ENCODE measurements at regions of chr1 and their contacts with region 1.

Region 1: DNA sequence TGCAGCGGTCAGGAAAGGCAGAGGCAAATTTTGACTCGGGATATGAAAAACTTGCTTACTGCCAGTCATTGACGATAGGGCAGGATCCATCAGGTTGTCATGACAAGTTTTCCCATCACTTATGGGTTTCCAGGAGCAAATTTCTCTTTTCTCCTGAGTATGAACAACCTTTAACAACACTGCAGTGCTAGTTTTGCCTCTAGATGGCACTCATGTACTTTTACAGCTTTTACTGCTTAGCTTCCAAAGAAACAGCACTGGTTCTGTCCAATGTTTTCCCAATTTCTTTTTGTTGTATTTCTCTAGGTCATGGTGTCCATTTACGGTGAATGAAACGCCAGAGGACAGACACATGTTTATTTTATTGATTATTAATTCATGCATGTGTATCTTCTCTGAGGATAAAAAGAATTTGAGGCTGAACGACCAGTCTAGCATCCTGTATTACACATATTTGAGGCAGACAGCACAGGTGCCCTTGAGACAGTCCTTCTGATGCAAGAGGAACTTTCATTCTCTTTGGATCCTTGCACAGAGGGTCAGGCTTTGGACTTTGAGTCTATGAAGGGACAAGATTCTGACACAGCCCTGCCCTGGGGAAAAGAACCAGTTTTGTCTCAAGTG is 112.3 kb upstream of the TRABD2B start:
- DNase-seq: no peak
- H3K4me3 ChIP-seq: no peak overlapping the region
- H3K27ac ChIP-seq: no peak overlapping the region
- H3K4me1 ChIP-seq: no peaks in the 10 kb centered on the region
- H3K27me3 ChIP-seq: no peaks in the 10 kb centered on the region
- CTCF ChIP-seq: peak; percentile 52 to 87 (median 77)

Region 2: GRCh38 chr1:48177257-48177656 is 67.8 kb after region 1 on chr1:
- intact Hi-C with region 1: no loop called
- DNase-seq: no peak
- H3K4me3 ChIP-seq: no peak overlapping the region
- H3K27ac ChIP-seq: no peak overlapping the region
- H3K4me1 ChIP-seq: no peaks in the 10 kb centered on the region
- H3K27me3 ChIP-seq: no peaks in the 10 kb centered on the region
- CTCF ChIP-seq: no peak

Region 3: GRCh38 chr1:48202030-48202752 is 92.7 kb after region 1 on chr1:
- intact Hi-C with region 1: loop called (anchors 1 kb)
- DNase-seq: peak in 1 of 2 donors; percentile 78
- H3K4me3 ChIP-seq: no peak overlapping the region
- H3K27ac ChIP-seq: no peak overlapping the region
- H3K4me1 ChIP-seq: peaks cover 0 to 7% of the 10 kb centered on the region in 2 donors
- H3K27me3 ChIP-seq: no peaks in the 10 kb centered on the region
- CTCF ChIP-seq: peak; percentile 66 to 82 (median 76)

Region 4: DNA sequence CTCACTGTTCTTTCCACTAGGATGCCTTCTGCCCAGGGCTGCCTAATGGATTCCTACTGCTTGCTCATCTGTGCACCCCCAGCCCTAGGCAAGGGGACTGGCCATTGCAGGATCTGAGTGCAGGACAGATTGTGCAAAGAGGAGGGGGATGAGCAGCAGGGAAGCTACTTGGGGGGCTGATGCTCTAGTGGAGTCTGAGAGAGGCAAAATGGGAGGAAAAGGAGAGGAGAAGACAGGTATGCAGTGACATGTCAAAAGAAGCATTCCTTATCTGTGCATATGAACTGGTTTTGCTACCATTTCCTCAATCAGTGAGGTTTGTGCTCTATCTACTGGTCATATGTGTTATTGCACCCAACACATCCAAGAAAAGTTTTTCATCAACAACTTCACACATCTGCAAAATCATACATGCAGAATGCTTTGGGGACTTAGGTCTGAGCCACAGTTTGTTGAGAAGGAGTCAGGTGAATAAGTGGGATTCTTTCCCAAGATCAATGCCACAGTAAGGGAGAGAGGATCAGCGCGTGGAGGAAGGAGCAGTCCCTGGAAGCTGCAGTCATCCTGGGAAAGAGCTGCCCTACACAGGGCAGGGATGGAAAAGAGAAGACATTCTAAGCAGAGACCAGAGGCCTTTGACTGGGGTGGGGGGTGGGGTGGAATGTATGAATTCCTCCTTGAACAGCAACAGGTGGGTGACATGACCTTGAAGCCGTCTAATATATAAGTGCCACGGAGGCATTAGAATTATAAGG is 127.4 kb after region 1 on chr1:
- intact Hi-C with region 1: loop called (anchors 10 kb)
- DNase-seq: no peak
- H3K4me3 ChIP-seq: no peak overlapping the region
- H3K27ac ChIP-seq: no peak overlapping the region
- H3K4me1 ChIP-seq: no peaks in the 10 kb centered on the region
- H3K27me3 ChIP-seq: no peaks in the 10 kb centered on the region
- CTCF ChIP-seq: peak; percentile 44 to 66 (median 63)

Region 5: DNA sequence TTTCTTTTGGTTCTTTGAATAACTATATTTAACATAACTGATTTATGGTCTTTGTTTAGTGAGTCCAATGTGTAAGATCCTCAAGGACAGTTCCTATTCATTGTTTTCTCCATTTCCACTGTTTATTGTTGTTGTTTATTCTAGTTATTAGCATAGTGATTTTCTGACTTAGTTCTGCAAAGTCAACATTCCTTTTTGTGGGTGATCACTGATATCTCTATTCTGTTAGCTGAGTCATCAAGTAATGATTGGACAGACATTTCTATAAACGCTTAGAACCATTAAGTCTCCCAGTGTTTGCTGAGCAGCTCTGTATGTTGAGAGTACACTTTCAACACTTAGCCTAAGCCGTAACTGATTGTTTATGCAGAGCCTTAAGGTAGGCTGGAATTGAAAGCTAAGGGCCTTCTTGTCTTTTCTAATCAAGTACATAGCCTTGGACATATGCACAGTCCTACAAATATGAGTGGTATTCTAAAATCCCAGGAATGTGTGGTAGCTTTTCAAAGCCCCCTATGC is 200.1 kb after region 1 on chr1:
- intact Hi-C with region 1: no loop called
- DNase-seq: no peak
- H3K4me3 ChIP-seq: no peak overlapping the region
- H3K27ac ChIP-seq: no peak overlapping the region
- H3K4me1 ChIP-seq: no peaks in the 10 kb centered on the region
- H3K27me3 ChIP-seq: no peaks in the 10 kb centered on the region
- CTCF ChIP-seq: no peak

Region 6: GRCh38 chr1:48498096-48498791 is 388.7 kb after region 1 on chr1:
- intact Hi-C with region 1: loop called (anchors 1 kb)
- DNase-seq: peak in 1 of 2 donors; percentile 88
- H3K4me3 ChIP-seq: no peak overlapping the region
- H3K27ac ChIP-seq: no peak overlapping the region
- H3K4me1 ChIP-seq: peaks cover 0 to 3% of the 10 kb centered on the region in 2 donors
- H3K27me3 ChIP-seq: no peaks in the 10 kb centered on the region
- CTCF ChIP-seq: peak; percentile 62 to 91 (median 86)